Activated T-helper 2 cell treated with anti-CD3 and anti-CD28 coated beads, Interferon-gamma antibody, Interleukin-2, Interleukin-4, amounts not matched to agents 10 μg/mL and 5 μg/mL and 100 μg/mL, durations not matched to agents 14 hours and 24 hours and 36 hours (primary cell): ENCODE measurements at regions of chr2 and their contacts with region 1.

Region 1: DNA sequence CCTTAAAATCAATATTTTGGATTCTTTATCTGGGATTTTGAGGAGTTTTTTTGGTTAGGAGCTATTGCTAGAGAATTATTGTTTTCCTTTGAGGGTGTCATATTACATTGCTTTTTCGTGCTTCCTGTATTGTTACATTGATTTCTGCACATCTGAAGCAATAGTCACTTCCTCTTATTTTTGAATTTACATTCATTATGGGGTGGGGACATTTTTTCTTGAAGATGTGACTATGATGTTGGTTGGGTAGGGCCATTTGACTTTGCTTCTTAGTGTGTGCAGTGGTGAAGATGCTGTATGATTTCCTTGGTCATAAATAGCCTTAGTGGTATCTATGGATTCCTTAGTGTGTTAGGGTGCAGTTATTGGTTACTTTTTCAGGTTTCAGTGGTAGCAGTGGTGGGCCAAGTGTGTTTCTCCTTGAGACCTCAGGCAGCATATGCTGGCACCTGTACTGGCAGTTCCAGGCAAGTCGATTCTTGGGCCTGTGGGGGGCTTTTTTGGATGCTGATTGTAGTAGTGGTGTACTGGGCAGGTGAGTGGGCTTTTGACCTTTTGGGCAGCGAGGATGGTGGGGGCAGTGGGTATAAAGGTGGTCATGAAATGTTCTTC is 61.8 kb downstream of the ARHGAP25 start:
- DNase-seq: no peak
- H3K4me3 Mint-ChIP-seq: no peak overlapping the region
- H3K27ac Mint-ChIP-seq: peak overlapping the region; percentile 47
- H3K4me1 Mint-ChIP-seq: peaks cover 48% of the 10 kb centered on the region
- H3K27me3 Mint-ChIP-seq: no peaks in the 10 kb centered on the region

Region 2: GRCh38 chr2:68774569-68775271 is 21.7 kb before region 1 on chr2:
- intact Hi-C with region 1: loop called (anchors 2 kb)
- DNase-seq: peak; percentile 52
- H3K4me3 Mint-ChIP-seq: peak overlapping the region; percentile 77
- H3K27ac Mint-ChIP-seq: peak overlapping the region; percentile 86
- H3K4me1 Mint-ChIP-seq: peaks cover 83% of the 10 kb centered on the region
- H3K27me3 Mint-ChIP-seq: no peaks in the 10 kb centered on the region

Region 3: GRCh38 chr2:68837164-68837860 is 40.9 kb after region 1 on chr2:
- intact Hi-C with region 1: loop called (anchors 5 kb)
- DNase-seq: peak; percentile 43
- H3K4me3 Mint-ChIP-seq: no peak overlapping the region
- H3K27ac Mint-ChIP-seq: peak overlapping the region; percentile 78
- H3K4me1 Mint-ChIP-seq: peaks cover 49% of the 10 kb centered on the region
- H3K27me3 Mint-ChIP-seq: no peaks in the 10 kb centered on the region